ENCODE measurements at regions of chr11 and their contacts with region 1.

Region 1: GRCh38 chr11:18634140-18635032 is at the start of gene SPTY2D1:
- DNase-seq: peak; percentile 87
- ATAC-seq: peak; percentile 93
- H3K4me3 Mint-ChIP-seq: peak within 1 kb of the TSS; percentile 99
- H3K27ac Mint-ChIP-seq: peak within 1 kb of the TSS; percentile 97
- H3K4me1 Mint-ChIP-seq: peaks cover 25% of the 10 kb centered on the region
- H3K27me3 Mint-ChIP-seq: peaks cover 3% of the 10 kb centered on the region
- CTCF ChIP-seq: no peak
- total RNA-seq, gene SPTY2D1: 22.0 and 22.7 TPM in 2 replicates

Region 2: GRCh38 chr11:17276236-17277023 is 1358.0 kb before region 1 on chr11 and contains the start of gene NUCB2:
- CTCF ChIA-PET with region 1: no interaction called
- POLR2A ChIA-PET with region 1: no interaction called
- intact Hi-C with region 1: loop called (anchors 5 kb)
- DNase-seq: peak; percentile 95
- ATAC-seq: peak; percentile 97
- H3K4me3 Mint-ChIP-seq: peak within 1 kb of the TSS; percentile 96
- H3K27ac Mint-ChIP-seq: peak within 1 kb of the TSS; percentile 85
- H3K4me1 Mint-ChIP-seq: peaks cover 20% of the 10 kb centered on the region
- H3K27me3 Mint-ChIP-seq: peaks cover 2% of the 10 kb centered on the region
- CTCF ChIP-seq: no peak
- total RNA-seq, gene NUCB2: 6.2 and 6.8 TPM in 2 replicates

Region 3: DNA sequence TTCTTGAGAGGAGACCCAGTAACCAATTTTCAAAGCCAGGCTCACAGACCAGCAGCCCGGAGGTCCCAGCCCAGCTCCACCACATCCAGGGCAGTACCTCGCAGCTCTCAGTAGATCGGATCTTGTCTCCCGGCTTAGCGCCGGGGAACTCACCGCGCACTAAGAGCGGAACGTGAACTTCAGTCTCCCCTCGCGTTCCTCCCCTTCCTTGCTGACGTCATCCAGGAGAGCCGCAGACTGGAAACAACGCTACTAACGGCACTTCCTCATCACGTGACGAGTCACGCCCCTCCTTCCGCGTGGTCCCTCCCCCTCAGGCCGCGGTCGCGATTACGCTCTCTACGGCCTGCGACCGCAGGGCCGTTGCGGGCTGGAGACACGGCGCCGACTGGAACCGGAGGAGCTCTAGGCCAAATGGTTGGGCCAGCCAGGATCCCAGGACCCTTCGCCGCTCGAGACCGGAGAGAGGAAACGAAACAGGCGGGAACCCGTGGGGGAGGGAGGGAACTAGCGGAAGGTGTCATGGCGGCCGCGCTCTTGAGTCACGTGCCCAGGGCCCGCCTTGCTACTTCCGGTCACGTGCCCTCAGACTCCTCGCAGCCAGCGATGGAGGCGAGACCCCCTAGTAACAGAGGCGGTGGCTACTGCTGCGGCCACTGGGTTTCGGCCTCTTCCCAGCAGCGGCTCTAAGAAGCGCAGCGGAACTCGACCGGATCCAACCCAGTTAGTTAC is 312.2 kb before region 1 on chr11 and contains the starts of genes GTF2H1 and HPS5:
- CTCF ChIA-PET with region 1: no interaction called
- POLR2A ChIA-PET with region 1: interaction called, 8 read pairs
- intact Hi-C with region 1: loop called (anchors 1 kb)
- DNase-seq: peak; percentile 93
- ATAC-seq: peak; percentile 87
- H3K4me3 Mint-ChIP-seq: peak within 1 kb of the TSS; percentile 99
- H3K27ac Mint-ChIP-seq: peak within 1 kb of the TSS; percentile 100
- H3K4me1 Mint-ChIP-seq: peaks cover 70% of the 10 kb centered on the region
- H3K27me3 Mint-ChIP-seq: no peaks in the 10 kb centered on the region
- CTCF ChIP-seq: no peak
- total RNA-seq, gene GTF2H1: 60.3 and 71.5 TPM in 2 replicates
- total RNA-seq, gene HPS5: 42.6 and 51.0 TPM in 2 replicates

Region 4: DNA sequence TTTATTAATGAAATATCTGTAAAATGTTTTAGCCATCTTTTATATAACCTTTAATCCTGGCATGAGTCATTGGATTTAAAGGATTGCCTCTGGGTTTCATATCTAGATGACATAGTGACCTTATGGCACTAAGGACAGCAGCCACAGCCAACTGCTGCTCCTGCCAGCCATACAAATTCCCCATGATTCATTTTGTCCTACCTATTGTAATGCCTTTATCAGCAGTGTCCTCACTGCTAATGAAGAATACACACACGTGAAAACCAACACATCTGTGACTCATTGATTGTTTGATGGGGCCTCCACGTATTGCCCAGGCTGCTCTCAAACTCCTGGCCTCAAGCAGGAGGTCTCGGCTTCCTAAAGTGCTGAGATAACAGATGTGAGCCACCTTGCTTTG is 177.0 kb before region 1 on chr11:
- CTCF ChIA-PET with region 1: no interaction called
- POLR2A ChIA-PET with region 1: no interaction called
- intact Hi-C with region 1: no loop called
- DNase-seq: no peak
- ATAC-seq: no peak
- H3K4me3 Mint-ChIP-seq: no peak overlapping the region
- H3K27ac Mint-ChIP-seq: no peak overlapping the region
- H3K4me1 Mint-ChIP-seq: no peaks in the 10 kb centered on the region
- H3K27me3 Mint-ChIP-seq: peaks cover 3% of the 10 kb centered on the region
- CTCF ChIP-seq: no peak

Region 5: DNA sequence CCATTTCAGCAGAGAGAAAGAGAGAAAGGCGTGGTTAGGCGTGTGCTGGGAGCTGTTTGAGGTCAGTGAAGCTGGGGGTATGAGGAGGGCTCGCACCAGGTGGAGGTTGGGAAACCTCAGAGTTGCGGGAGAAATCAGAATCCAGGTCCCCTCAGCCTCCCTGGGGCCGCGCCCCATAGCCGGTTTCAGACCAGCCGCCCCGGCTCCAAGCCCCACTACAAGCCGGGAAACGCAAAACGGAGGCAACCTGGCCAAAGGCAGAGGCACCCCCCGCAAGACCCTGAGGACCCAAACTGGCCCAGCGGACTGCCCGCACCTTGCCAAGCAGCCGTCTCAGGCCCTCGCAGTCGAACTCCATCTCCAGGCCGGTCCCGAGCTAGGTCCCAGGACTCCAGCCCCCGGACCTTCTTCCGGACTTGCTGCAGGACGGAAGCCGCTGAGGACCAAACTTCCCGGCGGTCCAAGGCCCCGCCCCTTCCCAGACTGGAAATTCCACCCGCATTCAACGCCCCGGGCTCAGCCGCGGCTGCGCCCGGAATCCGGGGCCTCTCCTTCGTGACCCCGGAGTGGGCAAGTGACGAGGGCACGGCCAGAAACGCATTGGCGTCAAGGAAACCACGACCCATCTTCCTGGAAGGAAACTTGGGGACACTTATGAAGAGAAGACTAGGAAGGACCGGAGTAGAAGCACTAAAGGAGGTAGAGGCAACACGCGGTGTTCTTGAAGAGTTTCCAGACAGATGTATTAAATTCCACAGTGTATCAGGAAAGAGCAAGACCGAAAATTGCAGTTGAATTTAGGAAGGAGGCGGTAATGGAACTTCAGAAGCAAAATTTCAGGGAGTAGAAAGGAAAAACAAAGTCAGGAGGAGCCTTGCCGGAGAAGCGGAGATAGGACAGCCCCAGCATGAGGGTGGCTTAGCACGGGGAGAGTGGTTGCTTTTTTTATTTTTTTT is 45.8 kb before region 1 on chr11 and contains the start of gene UEVLD:
- CTCF ChIA-PET with region 1: no interaction called
- POLR2A ChIA-PET with region 1: interaction called, 5 read pairs
- intact Hi-C with region 1: loop called (anchors 1 kb)
- DNase-seq: peak; percentile 65
- ATAC-seq: peak; percentile 73
- H3K4me3 Mint-ChIP-seq: no peak within 1 kb of the TSS
- H3K27ac Mint-ChIP-seq: no peak within 1 kb of the TSS
- H3K4me1 Mint-ChIP-seq: no peaks in the 10 kb centered on the region
- H3K27me3 Mint-ChIP-seq: no peaks in the 10 kb centered on the region
- CTCF ChIP-seq: no peak
- total RNA-seq, gene UEVLD: 12.9 and 18.0 TPM in 2 replicates

Region 6: DNA sequence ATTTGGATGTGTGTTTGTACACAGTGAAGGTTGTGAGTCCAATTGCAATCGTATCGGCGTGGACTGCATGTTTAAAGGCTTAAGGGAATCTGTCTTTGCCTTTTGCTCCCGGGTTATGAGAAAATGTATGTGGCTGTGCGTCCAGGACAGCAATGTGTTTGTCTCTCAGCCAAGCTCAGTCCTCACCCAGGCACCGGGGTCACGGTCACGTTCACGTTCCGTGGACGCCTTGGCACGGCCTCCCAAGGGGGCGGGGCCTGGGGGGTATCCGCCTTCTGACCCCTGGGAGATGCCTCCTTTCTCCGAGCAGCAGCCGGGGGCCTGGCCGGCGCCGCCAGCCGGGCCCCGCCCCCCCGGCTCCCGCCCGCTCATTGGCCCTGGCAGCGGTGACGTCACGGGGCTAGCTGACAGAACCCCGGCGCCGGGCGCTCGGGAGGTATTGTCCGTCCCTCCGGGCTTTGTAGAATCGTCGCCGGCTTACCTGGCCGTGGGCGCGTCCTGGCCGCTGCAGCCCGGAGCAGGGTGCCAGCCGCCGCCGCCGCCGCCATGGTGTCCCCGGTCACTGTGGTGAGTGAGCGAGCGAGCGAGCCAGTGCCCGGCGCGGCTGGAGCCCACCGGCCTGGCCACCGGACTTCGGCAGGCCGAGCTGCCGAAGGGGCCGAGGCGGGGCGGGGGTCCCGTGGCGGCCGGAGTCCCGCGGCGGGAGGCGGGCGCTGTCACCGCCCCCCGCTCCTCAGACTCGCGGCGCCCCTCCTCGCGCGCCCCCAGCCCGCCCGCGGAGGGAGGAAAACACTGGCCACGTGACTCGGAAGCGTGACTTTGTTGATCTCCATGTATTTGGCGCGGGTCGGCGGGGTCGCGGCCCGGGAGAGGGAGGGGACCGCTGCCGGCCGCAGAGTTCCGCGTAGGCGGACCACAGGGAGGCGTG is 64.2 kb after region 1 on chr11 and contains the start of gene TMEM86A:
- CTCF ChIA-PET with region 1: no interaction called
- POLR2A ChIA-PET with region 1: interaction called, 4 read pairs
- intact Hi-C with region 1: loop called (anchors 1 kb)
- DNase-seq: peak; percentile 83
- ATAC-seq: peak; percentile 98
- H3K4me3 Mint-ChIP-seq: peak within 1 kb of the TSS; percentile 80
- H3K27ac Mint-ChIP-seq: no peak within 1 kb of the TSS
- H3K4me1 Mint-ChIP-seq: peaks cover 17% of the 10 kb centered on the region
- H3K27me3 Mint-ChIP-seq: peaks cover 5% of the 10 kb centered on the region
- CTCF ChIP-seq: no peak
- total RNA-seq, gene TMEM86A: 0.10 and 0.13 TPM in 2 replicates

Region 7: DNA sequence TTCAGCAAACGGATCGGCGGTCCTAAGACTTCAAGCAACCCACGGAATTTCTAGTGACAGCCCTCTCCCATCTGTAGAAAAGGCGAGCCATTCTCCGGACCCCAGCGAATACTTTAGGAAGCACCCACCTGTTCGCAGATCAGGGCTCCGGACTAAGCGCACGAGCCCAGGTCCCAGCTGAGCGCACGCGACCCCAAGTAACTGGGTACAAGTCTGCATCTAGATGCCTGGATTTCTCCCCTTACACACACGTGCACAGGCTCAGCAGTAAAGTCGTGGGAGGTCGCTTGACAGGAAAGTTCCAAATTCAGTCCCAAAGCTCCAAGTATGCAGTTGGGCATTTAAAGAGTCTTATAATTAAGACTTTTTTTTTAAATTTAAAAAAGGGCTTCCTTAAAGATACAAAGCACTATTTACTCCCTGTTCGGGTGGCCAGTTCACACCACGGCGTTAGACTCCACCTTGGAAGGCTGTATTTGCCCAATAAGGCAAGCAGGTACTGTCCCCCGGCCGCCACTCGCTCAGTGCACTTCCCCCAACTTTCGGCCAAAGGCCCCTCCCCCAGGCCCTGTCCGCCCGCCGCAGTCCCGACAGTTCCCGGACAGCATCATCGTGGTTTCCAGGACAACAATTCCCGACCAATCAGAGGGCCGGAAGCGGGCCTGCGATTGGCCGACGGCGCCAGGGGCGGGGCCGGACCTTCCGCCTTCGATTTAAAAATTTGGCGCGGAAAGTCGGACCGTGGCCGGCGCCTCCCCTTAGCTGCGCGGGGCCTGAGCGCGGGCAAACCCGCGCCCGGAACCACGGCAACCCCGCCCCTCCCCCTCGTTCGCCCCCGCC is 606.3 kb after region 1 on chr11 and contains the start of gene E2F8:
- CTCF ChIA-PET with region 1: no interaction called
- POLR2A ChIA-PET with region 1: no interaction called
- intact Hi-C with region 1: loop called (anchors 2 kb)
- DNase-seq: peak; percentile 79
- ATAC-seq: peak; percentile 90
- H3K4me3 Mint-ChIP-seq: peak within 1 kb of the TSS; percentile 89
- H3K27ac Mint-ChIP-seq: peak within 1 kb of the TSS; percentile 46
- H3K4me1 Mint-ChIP-seq: peaks cover 18% of the 10 kb centered on the region
- H3K27me3 Mint-ChIP-seq: peaks cover 20% of the 10 kb centered on the region
- CTCF ChIP-seq: no peak
- total RNA-seq, gene E2F8: 0.82 and 0.88 TPM in 2 replicates